SK-N-SH (cell line): ENCODE measurements at regions of chr10 and their contacts with region 1.

Region 1: GRCh38 chr10:62038609-62039190 is 137.2 kb downstream of the ARID5B start:
- DNase-seq: peak; percentile 62
- H3K4me3 ChIP-seq: peak overlapping the region; percentile 17 to 43; a peak in 2 of 4 replicates
- H3K27ac ChIP-seq: peak overlapping the region; percentile 75 to 84
- H3K4me1 ChIP-seq: peaks cover 39 to 67% of the 10 kb centered on the region in 2 experiments
- H3K27me3 ChIP-seq: no peaks in the 10 kb centered on the region
- CTCF ChIP-seq: peak; percentile 95
- EP300 ChIP-seq: peak; percentile 56 to 92; a peak in 3 of 4 replicates
- RAD21 ChIP-seq: peak; percentile 96

Region 2: GRCh38 chr10:62019013-62019684 is 19.6 kb before region 1 on chr10:
- CTCF ChIA-PET with region 1: interaction called, 16 read pairs
- POLR2A ChIA-PET with region 1: no interaction called
- DNase-seq: no peak
- H3K4me3 ChIP-seq: no peak overlapping the region
- H3K27ac ChIP-seq: peak overlapping the region; percentile 6 to 48; a peak in 3 of 4 replicates
- H3K4me1 ChIP-seq: peaks cover 20 to 48% of the 10 kb centered on the region in 2 experiments; a peak in 3 of 4 replicates
- H3K27me3 ChIP-seq: no peaks in the 10 kb centered on the region
- CTCF ChIP-seq: no peak
- EP300 ChIP-seq: no peak
- RAD21 ChIP-seq: no peak

Region 3: DNA sequence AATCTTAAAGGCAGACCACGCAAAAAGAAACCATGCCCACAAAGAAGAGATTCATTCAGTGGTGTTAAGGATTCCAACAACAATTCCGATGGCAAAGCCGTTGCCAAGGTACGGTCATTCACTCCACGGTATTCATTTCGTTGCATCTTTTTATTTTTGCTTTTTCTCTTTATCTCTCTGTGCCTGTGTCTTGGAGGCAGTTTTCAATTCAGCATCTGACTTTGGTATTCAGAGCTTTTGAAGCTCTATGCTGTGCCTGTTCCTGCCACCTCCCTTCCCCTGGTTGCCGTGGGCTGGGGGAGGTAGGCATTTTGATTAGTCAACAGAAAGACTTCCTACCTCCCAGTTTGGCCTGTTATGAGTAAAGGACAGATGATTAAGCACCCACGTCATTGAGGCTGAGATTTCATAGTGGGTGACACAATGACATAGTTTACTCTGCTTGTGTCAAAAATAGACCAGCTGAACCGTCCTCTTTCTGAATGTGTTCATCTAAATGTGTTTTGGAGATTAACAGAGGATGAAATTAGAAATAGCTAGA is 12.3 kb after region 1 on chr10:
- CTCF ChIA-PET with region 1: interaction called, 49 read pairs
- POLR2A ChIA-PET with region 1: interaction called, 4 read pairs
- DNase-seq: no peak
- H3K4me3 ChIP-seq: peak overlapping the region; percentile 66 to 70; a peak in 3 of 4 replicates
- H3K27ac ChIP-seq: peak overlapping the region; percentile 85 to 97; a peak in 3 of 4 replicates
- H3K4me1 ChIP-seq: peaks cover 32 to 45% of the 10 kb centered on the region in 2 experiments; a peak in 3 of 4 replicates
- H3K27me3 ChIP-seq: no peaks in the 10 kb centered on the region
- CTCF ChIP-seq: no peak
- EP300 ChIP-seq: peak in 1 of 2 experiments; percentile 71; a peak in 2 of 4 replicates
- RAD21 ChIP-seq: no peak

Region 4: DNA sequence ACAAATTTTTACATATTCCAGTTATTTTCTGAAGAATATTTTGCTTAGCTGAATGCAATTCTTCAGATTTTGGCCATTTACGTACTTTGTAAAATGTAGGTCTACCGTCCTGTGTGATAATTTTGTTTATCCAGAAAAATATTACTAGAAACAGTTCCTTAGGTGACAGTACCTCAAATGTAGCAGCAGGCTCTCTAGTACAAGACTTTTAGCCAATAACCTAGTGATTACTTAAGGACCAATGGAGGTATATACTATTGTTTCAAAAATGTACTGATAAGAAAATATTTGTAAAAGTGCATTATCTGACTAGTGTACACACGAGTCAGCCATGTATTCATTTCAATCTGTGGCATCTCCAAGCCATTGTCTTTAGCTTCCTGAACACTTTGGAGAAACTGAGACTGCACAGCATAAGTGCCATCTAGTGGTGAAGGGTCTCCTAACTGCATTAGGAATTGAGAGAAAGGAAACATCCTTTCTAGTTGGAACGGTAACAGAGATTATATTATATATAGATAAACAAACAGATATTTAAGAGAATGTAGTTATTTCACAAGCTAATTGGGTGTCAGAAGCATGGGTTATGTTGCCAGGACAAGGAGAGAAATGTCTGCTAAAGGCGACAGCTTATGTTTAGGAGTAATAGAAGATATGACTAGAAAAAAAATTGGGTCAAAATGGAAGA is 206.2 kb after region 1 on chr10:
- CTCF ChIA-PET with region 1: interaction called, 190 read pairs
- POLR2A ChIA-PET with region 1: interaction called, 4 read pairs
- DNase-seq: peak; percentile 30
- H3K4me3 ChIP-seq: peak overlapping the region in 1 of 2 experiments; percentile 20; a peak in 1 of 4 replicates
- H3K27ac ChIP-seq: peak overlapping the region; percentile 40 to 58
- H3K4me1 ChIP-seq: peaks cover 2 to 33% of the 10 kb centered on the region in 2 experiments; a peak in 3 of 4 replicates
- H3K27me3 ChIP-seq: no peaks in the 10 kb centered on the region
- CTCF ChIP-seq: peak; percentile 96
- EP300 ChIP-seq: no peak
- RAD21 ChIP-seq: peak; percentile 97